ENCODE measurements at regions of chr11 and their contacts with region 1.

Region 1: DNA sequence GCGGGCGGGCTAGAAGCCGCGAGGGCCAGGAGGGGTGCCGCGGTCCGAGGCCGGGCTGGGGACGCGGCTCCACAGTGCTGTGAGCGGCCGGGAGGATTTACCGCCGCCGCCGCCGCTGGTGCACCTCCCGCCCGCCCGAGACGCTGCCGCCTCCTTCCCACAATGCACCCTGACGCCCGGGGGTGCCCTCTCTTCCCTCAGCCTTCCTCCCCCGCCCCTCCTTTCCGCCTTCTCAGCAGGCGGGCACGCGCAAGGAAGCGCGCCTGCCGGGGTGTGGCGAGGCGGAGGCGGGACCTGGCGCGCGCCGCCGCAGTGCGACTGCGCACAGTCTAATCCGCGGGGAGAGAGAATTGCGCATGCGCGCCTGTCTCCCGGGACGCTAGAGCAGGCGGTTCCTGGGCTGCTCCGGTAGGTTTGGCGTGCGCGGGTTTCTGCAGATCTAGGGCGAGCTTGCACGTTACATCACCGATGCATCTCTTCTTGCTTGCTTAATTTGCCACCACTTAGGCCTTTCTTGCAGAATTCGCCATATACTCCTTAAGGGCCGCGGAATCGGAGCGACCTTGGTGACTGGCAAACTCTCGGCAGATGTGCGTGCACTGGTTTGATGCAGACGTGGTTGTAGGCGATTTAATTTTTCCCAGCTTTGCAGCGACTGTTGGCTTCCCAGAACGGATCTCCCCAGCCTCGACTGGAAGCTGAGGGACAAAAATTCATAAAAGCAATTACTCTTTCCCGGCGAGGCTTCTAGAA is at the starts of genes GVQW3 and THAP12:
- DNase-seq: peak; percentile 97 to 99 (median 98)
- ATAC-seq: peak; percentile 97
- H3K4me3 ChIP-seq: peak within 1 kb of the TSS; percentile 92
- H3K27ac ChIP-seq: peak within 1 kb of the TSS; percentile 86
- H3K4me1 ChIP-seq: peaks cover 5 to 11% of the 10 kb centered on the region in 2 experiments; a peak in 4 of 5 replicates
- H3K27me3 ChIP-seq: no peaks in the 10 kb centered on the region
- CTCF ChIP-seq: peak; percentile 30 to 78 (median 62); a peak in 4 of 6 replicates
- EP300 ChIP-seq: 0 out of 2 replicates have a peak, but pooled peaks have one; percentile 12
- POLR2A ChIP-seq: peak; percentile 56
- RAD21 ChIP-seq: no peak
- polyA plus RNA-seq, gene GVQW3: 0.66 to 1.0 TPM
- polyA plus RNA-seq, gene THAP12: 28.1 to 28.8 TPM

Region 2: GRCh38 chr11:76074148-76075095 is 306.7 kb before region 1 on chr11:
- CTCF ChIA-PET with region 1: no interaction called
- POLR2A ChIA-PET with region 1: no interaction called
- in situ Hi-C with region 1: no loop called
- intact Hi-C with region 1: no loop called
- DNase-seq: peak; percentile 27 to 67 (median 48)
- ATAC-seq: peak; percentile 93
- H3K4me3 ChIP-seq: no peak overlapping the region
- H3K27ac ChIP-seq: peak overlapping the region; percentile 79
- H3K4me1 ChIP-seq: peaks cover 5 to 10% of the 10 kb centered on the region in 2 experiments; a peak in 2 of 5 replicates
- H3K27me3 ChIP-seq: no peaks in the 10 kb centered on the region
- CTCF ChIP-seq: no peak
- EP300 ChIP-seq: peak; percentile 50; the same call in 1 of the 2 replicates
- POLR2A ChIP-seq: no peak
- RAD21 ChIP-seq: no peak

Region 3: DNA sequence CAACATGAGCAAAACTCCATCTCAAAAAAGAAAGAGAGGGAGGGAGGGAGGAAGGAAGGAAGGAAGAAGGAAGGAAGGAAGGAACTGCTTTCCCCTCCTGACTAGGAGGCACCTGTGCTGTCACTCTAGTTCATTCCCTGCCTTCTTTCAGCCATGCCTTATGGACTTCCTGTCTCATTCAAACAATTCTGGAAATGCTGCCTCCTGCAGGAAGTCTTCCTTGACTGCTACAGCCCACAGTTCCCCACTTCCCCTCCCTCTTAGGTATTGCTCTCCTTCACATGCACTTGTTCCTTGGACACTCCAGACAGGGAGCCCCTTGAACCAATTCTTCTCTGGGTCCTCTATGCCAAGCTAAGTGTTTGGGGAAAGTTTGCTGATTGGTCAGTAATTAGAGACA is 143.2 kb before region 1 on chr11:
- CTCF ChIA-PET with region 1: no interaction called
- POLR2A ChIA-PET with region 1: no interaction called
- in situ Hi-C with region 1: no loop called
- intact Hi-C with region 1: no loop called
- DNase-seq: peak; percentile 46 to 63 (median 59)
- ATAC-seq: no peak
- H3K4me3 ChIP-seq: no peak overlapping the region
- H3K27ac ChIP-seq: no peak overlapping the region
- H3K4me1 ChIP-seq: peaks cover 16 to 37% of the 10 kb centered on the region in 2 experiments
- H3K27me3 ChIP-seq: peaks cover 0 to 7% of the 10 kb centered on the region in 2 experiments; a peak in 2 of 5 replicates
- CTCF ChIP-seq: peak; percentile 25 to 35 (median 33); a peak in 3 of 6 replicates
- EP300 ChIP-seq: no peak
- POLR2A ChIP-seq: no peak
- RAD21 ChIP-seq: no peak

Region 4: DNA sequence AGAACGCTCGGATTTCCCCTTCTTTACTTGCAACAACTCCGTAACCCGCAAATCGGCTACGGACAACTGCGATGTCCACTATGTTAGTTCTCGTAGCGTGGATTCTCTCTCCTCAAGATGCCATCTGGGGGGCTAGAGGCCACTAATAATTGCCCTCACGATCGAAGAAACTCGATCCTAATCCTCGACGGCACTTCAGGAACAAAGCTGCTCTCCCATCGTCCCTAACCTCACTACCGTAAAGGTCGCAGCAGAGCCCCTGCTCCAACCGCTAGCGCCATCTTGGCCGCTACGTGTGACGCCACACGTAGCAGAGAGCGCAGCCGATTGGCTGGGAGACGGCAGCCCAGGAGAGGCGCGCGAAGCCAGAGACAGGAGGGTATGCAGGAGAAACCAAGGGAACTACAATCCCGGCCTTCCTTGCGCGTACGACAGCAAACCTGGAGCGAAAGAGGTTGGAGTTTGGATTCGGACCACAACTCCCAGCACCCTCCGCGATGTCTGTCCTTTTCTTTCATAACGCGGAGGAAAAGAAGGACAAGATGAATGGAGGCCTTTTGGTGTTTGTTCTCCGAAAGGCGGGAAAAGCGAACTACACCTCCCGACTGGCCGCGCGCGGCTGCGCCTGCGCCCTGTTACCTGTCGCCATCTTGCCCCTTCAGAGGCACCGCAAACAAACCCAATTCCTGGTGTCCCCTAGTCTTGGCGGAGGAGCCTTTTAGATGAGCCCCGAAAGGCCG is 63.4 kb after region 1 on chr11 and contains the start of gene EMSY:
- CTCF ChIA-PET with region 1: no interaction called
- POLR2A ChIA-PET with region 1: no interaction called
- in situ Hi-C with region 1: no loop called
- intact Hi-C with region 1: loop called (anchors 5 kb)
- DNase-seq: peak; percentile 94 to 98 (median 96)
- ATAC-seq: peak; percentile 94
- H3K4me3 ChIP-seq: peak within 1 kb of the TSS; percentile 68
- H3K27ac ChIP-seq: peak within 1 kb of the TSS; percentile 99
- H3K4me1 ChIP-seq: peaks cover 2 to 24% of the 10 kb centered on the region in 2 experiments; a peak in 4 of 5 replicates
- H3K27me3 ChIP-seq: no peaks in the 10 kb centered on the region
- CTCF ChIP-seq: no peak
- EP300 ChIP-seq: peak; percentile 30; the same call in 1 of the 2 replicates
- POLR2A ChIP-seq: peak; percentile 99
- RAD21 ChIP-seq: no peak
- polyA plus RNA-seq, gene EMSY: 12.7 to 13.8 TPM

Measured in K562 (cell line).